ENCODE measurements at regions of chr1 and their contacts with region 1.

Region 1: GRCh38 chr1:75233302-75233929 is 99.2 kb downstream of the LHX8 start:
- DNase-seq: peak in 1 of 2 experiments; percentile 47
- H3K4me3 ChIP-seq: no peak overlapping the region
- H3K4me3 Mint-ChIP-seq: no peak overlapping the region
- H3K27ac Mint-ChIP-seq: no peak overlapping the region
- H3K4me1 ChIP-seq: no peaks in the 10 kb centered on the region
- H3K4me1 Mint-ChIP-seq: peaks cover 7% of the 10 kb centered on the region
- H3K27me3 ChIP-seq: no peaks in the 10 kb centered on the region
- H3K27me3 Mint-ChIP-seq: no peaks in the 10 kb centered on the region
- CTCF ChIP-seq: peak; percentile 43

Region 2: GRCh38 chr1:75152092-75152491 is 81.3 kb before region 1 on chr1:
- CTCF ChIA-PET with region 1: no interaction called
- POLR2A ChIA-PET with region 1: no interaction called
- intact Hi-C with region 1: no loop called
- DNase-seq: no peak
- H3K4me3 ChIP-seq: no peak overlapping the region
- H3K4me3 Mint-ChIP-seq: no peak overlapping the region
- H3K27ac Mint-ChIP-seq: no peak overlapping the region
- H3K4me1 ChIP-seq: no peaks in the 10 kb centered on the region
- H3K4me1 Mint-ChIP-seq: no peaks in the 10 kb centered on the region
- H3K27me3 ChIP-seq: no peaks in the 10 kb centered on the region
- H3K27me3 Mint-ChIP-seq: peaks cover 6% of the 10 kb centered on the region
- CTCF ChIP-seq: no peak

Region 3: DNA sequence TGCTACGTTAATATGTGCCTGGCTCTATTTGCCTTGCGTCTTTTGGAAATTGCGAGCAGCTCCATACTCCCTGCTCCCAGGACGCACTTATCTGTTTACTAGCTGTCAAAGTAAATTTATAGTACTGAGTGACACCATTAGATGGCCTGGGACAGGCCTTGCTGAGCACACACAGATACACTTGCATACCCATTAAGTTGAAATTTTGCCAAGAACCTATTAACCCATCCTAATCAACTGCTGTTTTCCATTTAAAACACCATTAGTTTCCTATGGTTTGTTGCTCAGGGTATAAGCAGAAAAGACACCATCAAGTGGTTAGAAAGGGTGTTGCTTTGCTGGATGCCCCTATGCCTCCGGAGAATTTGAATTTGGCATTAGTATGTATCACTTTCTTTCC is 190.2 kb after region 1 on chr1:
- CTCF ChIA-PET with region 1: no interaction called
- POLR2A ChIA-PET with region 1: no interaction called
- intact Hi-C with region 1: loop called (anchors 10 kb)
- DNase-seq: no peak
- H3K4me3 ChIP-seq: no peak overlapping the region
- H3K4me3 Mint-ChIP-seq: no peak overlapping the region
- H3K27ac Mint-ChIP-seq: no peak overlapping the region
- H3K4me1 ChIP-seq: no peaks in the 10 kb centered on the region
- H3K4me1 Mint-ChIP-seq: no peaks in the 10 kb centered on the region
- H3K27me3 ChIP-seq: no peaks in the 10 kb centered on the region
- H3K27me3 Mint-ChIP-seq: no peaks in the 10 kb centered on the region
- CTCF ChIP-seq: peak in 1 of 2 experiments; percentile 4

Region 4: GRCh38 chr1:75632350-75632949 is 399.0 kb after region 1 on chr1:
- CTCF ChIA-PET with region 1: no interaction called
- POLR2A ChIA-PET with region 1: no interaction called
- intact Hi-C with region 1: loop called (anchors 1 kb)
- DNase-seq: peak in 1 of 2 experiments; percentile 43
- H3K4me3 ChIP-seq: no peak overlapping the region
- H3K4me3 Mint-ChIP-seq: no peak overlapping the region
- H3K27ac Mint-ChIP-seq: no peak overlapping the region
- H3K4me1 ChIP-seq: no peaks in the 10 kb centered on the region
- H3K4me1 Mint-ChIP-seq: peaks cover 7% of the 10 kb centered on the region
- H3K27me3 ChIP-seq: no peaks in the 10 kb centered on the region
- H3K27me3 Mint-ChIP-seq: no peaks in the 10 kb centered on the region
- CTCF ChIP-seq: peak; percentile 50 to 62

Region 5: DNA sequence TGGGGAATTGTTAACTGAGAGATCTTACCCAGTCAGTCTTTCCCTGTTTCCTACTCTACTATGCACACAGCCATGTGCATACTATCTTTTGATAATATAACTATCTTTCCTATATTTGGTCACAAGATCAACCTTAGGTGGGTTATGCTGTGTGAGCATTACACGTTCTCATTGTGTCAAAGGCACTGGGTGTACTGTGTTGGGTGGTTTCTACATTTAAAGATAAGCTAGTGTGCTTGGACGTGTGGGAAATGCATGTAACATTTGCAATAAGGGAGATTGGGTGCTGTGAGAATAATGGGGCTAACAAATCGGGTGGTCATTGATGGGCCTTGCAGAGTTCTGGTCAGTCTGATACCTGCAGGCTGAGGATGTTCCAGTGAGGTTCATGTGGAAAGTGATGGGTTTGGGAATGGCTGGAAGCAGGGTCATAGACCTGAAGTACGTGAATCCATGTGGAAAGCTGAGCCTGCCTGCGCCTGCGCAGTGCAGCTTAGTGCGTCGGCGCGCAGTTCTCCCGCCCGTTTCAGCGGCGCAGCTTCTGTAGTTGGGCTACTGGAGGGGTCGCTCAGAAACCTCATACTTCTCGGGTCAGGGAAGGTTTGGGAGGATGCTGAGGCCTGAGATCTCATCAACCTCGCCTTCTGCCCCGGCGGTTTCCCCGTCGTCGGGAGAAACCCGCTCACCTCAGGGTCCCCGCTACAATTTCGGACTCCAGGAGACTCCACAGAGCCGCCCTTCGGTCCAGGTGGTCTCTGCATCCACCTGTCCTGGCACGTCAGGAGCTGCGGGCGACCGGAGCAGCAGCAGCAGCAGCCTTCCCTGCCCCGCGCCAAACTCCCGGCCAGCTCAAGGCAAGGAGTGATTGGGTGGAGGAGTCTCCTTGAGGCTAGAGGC is 563.2 kb after region 1 on chr1 and contains the start of gene MSH4:
- CTCF ChIA-PET with region 1: no interaction called
- POLR2A ChIA-PET with region 1: no interaction called
- intact Hi-C with region 1: loop called (anchors 10 kb)
- DNase-seq: peak in 1 of 2 experiments; percentile 35
- H3K4me3 ChIP-seq: no peak within 1 kb of the TSS
- H3K4me3 Mint-ChIP-seq: peak within 1 kb of the TSS; percentile 49
- H3K27ac Mint-ChIP-seq: peak within 1 kb of the TSS; percentile 80
- H3K4me1 ChIP-seq: no peaks in the 10 kb centered on the region
- H3K4me1 Mint-ChIP-seq: no peaks in the 10 kb centered on the region
- H3K27me3 ChIP-seq: no peaks in the 10 kb centered on the region
- H3K27me3 Mint-ChIP-seq: no peaks in the 10 kb centered on the region
- CTCF ChIP-seq: no peak
- total RNA-seq, gene MSH4: 0.34 and 0.49 TPM in 2 replicates